CD4-positive, alpha-beta memory T cell (primary cell): ENCODE measurements at regions of chr1 and their contacts with region 1.

Region 1: DNA sequence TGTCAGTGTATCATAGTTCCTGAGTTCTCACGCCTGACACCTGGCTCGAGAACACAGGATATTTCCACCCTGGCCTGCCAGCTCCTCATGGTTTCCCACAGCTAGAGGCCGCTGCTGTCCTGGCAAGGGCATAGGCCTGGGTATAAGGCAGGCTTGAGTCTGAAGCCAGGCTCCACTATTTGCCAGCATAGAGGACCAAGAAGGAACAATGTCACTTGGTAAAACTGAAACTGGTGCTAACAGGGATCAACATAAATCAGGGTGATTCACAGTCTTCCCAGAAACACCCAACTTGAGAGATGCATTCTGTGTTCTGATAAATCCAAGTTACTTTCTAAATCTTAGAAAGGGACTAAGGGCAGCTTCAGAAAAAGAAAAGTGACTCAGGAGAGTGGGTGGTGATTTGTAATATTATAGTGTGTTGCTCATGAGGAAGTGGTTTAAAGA is 6.9 kb upstream of the S100A2 start:
- DNase-seq: peak in 4 of 5 donors; percentile 24 to 45 (median 30)
- H3K4me3 ChIP-seq: no peak overlapping the region
- H3K4me3 Mint-ChIP-seq: no peak overlapping the region
- H3K27ac ChIP-seq: no peak overlapping the region
- H3K27ac Mint-ChIP-seq: peak overlapping the region in 3 of 7 donors; percentile 15 to 41 (median 27)
- H3K4me1 ChIP-seq: peaks cover 14% of the 10 kb centered on the region
- H3K4me1 Mint-ChIP-seq: peaks cover 9 to 27% (median 12%) of the 10 kb centered on the region in 4 donors
- H3K27me3 ChIP-seq: no peaks in the 10 kb centered on the region
- H3K27me3 Mint-ChIP-seq: peaks cover 0 to 5% of the 10 kb centered on the region in 2 donors

Region 2: DNA sequence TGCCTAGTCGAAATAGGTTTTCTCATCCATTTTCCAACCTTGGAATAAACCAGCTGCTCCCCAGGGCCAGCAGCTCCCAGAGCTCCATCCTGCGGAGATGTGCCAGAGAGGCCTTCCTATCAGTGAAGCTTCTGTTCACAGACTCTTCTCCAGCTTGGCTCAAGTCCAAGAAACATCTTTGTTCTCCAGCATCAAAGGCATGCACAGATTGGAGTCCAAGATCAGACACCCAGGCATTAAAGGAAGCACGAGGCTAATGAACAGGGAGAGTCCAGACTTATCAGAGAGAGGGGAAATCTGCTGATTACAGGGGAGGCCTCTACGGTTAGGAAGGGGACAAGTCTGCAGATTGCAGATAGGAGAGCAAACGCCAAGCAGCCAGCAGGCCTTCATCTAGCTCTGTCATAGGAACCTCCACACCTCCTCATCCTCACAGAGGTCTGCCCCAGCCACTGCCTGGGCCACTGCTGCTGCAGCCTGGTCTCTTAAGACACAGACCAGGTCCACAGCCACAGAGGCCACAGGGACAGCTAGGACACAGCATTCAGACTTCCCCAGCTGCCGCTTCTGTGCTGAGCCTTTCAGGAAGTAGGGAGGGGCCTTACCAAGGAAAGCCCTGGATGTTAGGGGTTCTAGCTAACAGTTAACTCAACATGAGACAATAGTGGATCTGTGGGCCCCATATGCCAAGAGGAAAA is 351.8 kb before region 1 on chr1:
- CTCF ChIA-PET with region 1: no interaction called
- POLR2A ChIA-PET with region 1: no interaction called
- intact Hi-C with region 1: no loop called
- DNase-seq: no peak
- H3K4me3 ChIP-seq: no peak overlapping the region
- H3K4me3 Mint-ChIP-seq: no peak overlapping the region
- H3K27ac ChIP-seq: no peak overlapping the region
- H3K27ac Mint-ChIP-seq: no peak overlapping the region
- H3K4me1 ChIP-seq: no peaks in the 10 kb centered on the region
- H3K4me1 Mint-ChIP-seq: peaks cover 0 to 6% (median 4%) of the 10 kb centered on the region in 4 donors
- H3K27me3 ChIP-seq: no peaks in the 10 kb centered on the region
- H3K27me3 Mint-ChIP-seq: peaks cover 9 to 26% of the 10 kb centered on the region in 2 donors

Region 3: GRCh38 chr1:153520230-153520629 is 52.4 kb before region 1 on chr1:
- CTCF ChIA-PET with region 1: interaction called, 243 read pairs
- POLR2A ChIA-PET with region 1: interaction called, 3 read pairs
- intact Hi-C with region 1: no loop called
- DNase-seq: no peak
- H3K4me3 ChIP-seq: no peak overlapping the region
- H3K4me3 Mint-ChIP-seq: peak overlapping the region in 1 of 8 donors; percentile 17
- H3K27ac ChIP-seq: no peak overlapping the region
- H3K27ac Mint-ChIP-seq: peak overlapping the region in 1 of 7 donors; percentile 52
- H3K4me1 ChIP-seq: peaks cover 10% of the 10 kb centered on the region
- H3K4me1 Mint-ChIP-seq: peaks cover 4 to 5% (median 5%) of the 10 kb centered on the region in 4 donors
- H3K27me3 ChIP-seq: no peaks in the 10 kb centered on the region
- H3K27me3 Mint-ChIP-seq: no peaks in the 10 kb centered on the region

Region 4: GRCh38 chr1:153545067-153546055 is 27.2 kb before region 1 on chr1 and contains the start of gene S100A4:
- CTCF ChIA-PET with region 1: interaction called, 41 read pairs
- POLR2A ChIA-PET with region 1: interaction called, 30 read pairs
- intact Hi-C with region 1: no loop called
- DNase-seq: peak; percentile 84 to 92 (median 89)
- H3K4me3 ChIP-seq: peak within 1 kb of the TSS; percentile 71 to 79
- H3K4me3 Mint-ChIP-seq: peak within 1 kb of the TSS; percentile 96 to 99 (median 98)
- H3K27ac ChIP-seq: peak within 1 kb of the TSS; percentile 74
- H3K27ac Mint-ChIP-seq: peak within 1 kb of the TSS; percentile 93 to 98 (median 97)
- H3K4me1 ChIP-seq: peaks cover 70% of the 10 kb centered on the region
- H3K4me1 Mint-ChIP-seq: peaks cover 49 to 81% (median 68%) of the 10 kb centered on the region in 4 donors
- H3K27me3 ChIP-seq: no peaks in the 10 kb centered on the region
- H3K27me3 Mint-ChIP-seq: no peaks in the 10 kb centered on the region
- total RNA-seq, gene S100A4: 329 to 346 TPM

Region 5: DNA sequence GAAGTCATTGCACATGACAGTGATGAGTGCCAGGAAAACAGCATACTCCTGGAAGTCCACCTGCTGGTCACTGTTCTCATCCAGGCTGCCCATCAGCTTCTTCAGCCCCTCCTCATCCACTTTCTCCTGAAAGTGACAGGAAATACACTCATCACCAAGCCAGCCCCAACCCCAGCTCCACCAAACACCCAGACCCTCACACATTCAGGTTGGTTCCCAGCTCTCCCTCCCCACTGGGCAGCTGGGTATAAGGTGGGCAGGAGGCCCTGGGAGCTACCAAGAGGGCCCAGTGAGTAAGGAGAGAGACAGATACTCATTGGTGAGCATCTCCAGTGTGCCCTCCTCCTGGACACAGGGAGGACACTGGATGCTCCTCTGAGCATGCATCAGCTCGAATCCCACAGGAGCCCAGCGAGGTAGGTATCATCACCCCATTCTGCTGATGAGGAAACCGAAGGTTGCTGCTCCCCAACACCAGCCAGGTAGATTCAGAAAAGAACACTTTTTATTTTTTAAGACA is 11.1 kb before region 1 on chr1:
- CTCF ChIA-PET with region 1: interaction called, 22 read pairs
- POLR2A ChIA-PET with region 1: interaction called, 3 read pairs
- intact Hi-C with region 1: no loop called
- DNase-seq: no peak
- H3K4me3 ChIP-seq: no peak overlapping the region
- H3K4me3 Mint-ChIP-seq: no peak overlapping the region
- H3K27ac ChIP-seq: no peak overlapping the region
- H3K27ac Mint-ChIP-seq: peak overlapping the region in 3 of 7 donors; percentile 51 to 75 (median 52)
- H3K4me1 ChIP-seq: peaks cover 12% of the 10 kb centered on the region
- H3K4me1 Mint-ChIP-seq: peaks cover 7 to 10% (median 9%) of the 10 kb centered on the region in 4 donors
- H3K27me3 ChIP-seq: no peaks in the 10 kb centered on the region
- H3K27me3 Mint-ChIP-seq: no peaks in the 10 kb centered on the region

Region 6: DNA sequence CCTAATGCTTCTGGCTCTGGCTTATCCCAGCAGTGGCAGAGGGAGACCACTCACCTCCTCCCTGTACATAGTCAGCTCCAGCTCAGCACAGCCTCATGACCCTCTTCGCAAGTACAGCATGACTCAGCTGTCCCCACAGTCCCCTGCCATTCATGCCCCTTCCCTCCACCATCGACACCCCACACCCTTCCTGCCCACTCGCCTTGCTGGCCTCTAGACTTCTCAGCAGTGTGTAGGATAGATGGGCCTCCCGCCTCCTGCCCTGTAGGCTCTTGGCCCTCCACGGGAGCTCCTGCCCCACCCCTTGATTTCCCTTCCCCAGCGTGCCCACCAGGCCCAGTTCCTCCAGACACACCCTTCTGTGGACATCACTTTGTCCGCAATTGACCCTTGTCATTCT is 115.7 kb after region 1 on chr1:
- CTCF ChIA-PET with region 1: no interaction called
- POLR2A ChIA-PET with region 1: no interaction called
- intact Hi-C with region 1: no loop called
- DNase-seq: no peak
- H3K4me3 ChIP-seq: no peak overlapping the region
- H3K4me3 Mint-ChIP-seq: peak overlapping the region in 1 of 8 donors; percentile 5
- H3K27ac ChIP-seq: no peak overlapping the region
- H3K27ac Mint-ChIP-seq: peak overlapping the region in 1 of 7 donors; percentile 4
- H3K4me1 ChIP-seq: peaks cover 4% of the 10 kb centered on the region
- H3K4me1 Mint-ChIP-seq: peaks cover 3 to 9% (median 5%) of the 10 kb centered on the region in 4 donors
- H3K27me3 ChIP-seq: no peaks in the 10 kb centered on the region
- H3K27me3 Mint-ChIP-seq: peaks cover 3 to 8% of the 10 kb centered on the region in 2 donors

Region 7: GRCh38 chr1:153749408-153750005 is 176.9 kb after region 1 on chr1:
- CTCF ChIA-PET with region 1: interaction called, 3 read pairs
- POLR2A ChIA-PET with region 1: no interaction called
- intact Hi-C with region 1: loop called (anchors 1 kb)
- DNase-seq: peak; percentile 73 to 78 (median 77)
- H3K4me3 ChIP-seq: no peak overlapping the region
- H3K4me3 Mint-ChIP-seq: no peak overlapping the region
- H3K27ac ChIP-seq: no peak overlapping the region
- H3K27ac Mint-ChIP-seq: peak overlapping the region in 3 of 7 donors; percentile 6 to 73 (median 70)
- H3K4me1 ChIP-seq: no peaks in the 10 kb centered on the region
- H3K4me1 Mint-ChIP-seq: peaks cover 0 to 8% (median 5%) of the 10 kb centered on the region in 4 donors
- H3K27me3 ChIP-seq: no peaks in the 10 kb centered on the region
- H3K27me3 Mint-ChIP-seq: no peaks in the 10 kb centered on the region